Motor neuron (in vitro differentiated cells): ENCODE measurements at regions of chr4 and their contacts with region 1.

Region 1: GRCh38 chr4:4488405-4489404 is 53.1 kb downstream of the STX18 start:
- ATAC-seq: peak; percentile 82 to 97 (median 90)
- H3K4me3 ChIP-seq: no peak overlapping the region
- H3K27ac ChIP-seq: no peak overlapping the region
- H3K4me1 ChIP-seq: peaks cover 0 to 5% of the 10 kb centered on the region in 2 donors

Region 2: DNA sequence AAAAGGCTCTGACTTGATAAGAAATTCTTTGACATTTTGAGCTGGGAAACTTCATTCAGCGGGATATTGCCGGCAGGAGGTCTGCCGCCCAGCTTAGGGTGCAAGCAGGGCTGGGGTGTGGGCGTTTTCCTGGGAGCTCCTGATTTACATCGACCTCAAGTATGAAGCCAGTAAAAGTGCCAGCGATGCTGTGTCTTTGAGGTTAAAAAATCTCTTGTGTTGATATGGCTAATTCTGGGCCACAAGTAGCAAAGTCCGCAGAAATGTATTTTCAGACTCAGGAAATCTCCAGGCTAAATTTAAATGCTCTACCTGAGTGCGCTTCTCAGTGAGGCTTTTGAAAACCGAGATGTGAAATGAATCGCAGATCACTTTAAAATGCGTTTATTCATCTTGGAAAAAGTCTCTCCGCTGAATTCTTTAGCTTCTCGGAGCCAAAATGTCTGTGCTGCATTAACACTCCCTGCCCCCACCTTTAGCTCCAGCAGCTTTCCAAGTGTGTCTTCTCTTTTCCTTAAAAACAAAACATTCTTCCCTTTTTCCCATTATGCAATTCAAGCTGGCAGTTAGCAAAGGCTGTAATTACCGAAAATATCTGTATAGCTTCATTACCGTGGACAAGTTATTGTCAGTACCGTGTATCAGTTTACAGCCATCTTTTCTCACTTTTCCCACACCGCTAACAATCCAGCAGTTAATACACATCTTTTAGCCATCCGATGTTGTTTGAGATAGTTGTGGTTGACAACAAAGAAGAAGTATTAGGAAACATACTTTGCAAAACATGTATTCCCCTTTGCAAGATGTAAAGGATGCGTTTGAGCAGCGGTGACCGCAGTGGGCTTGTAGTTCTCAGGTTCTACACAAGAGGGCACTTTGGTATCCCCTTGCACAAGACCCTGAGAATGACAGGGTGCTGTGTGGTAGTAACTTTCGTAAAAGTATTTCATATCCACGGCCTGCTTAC is 189.1 kb after region 1 on chr4:
- in situ Hi-C with region 1: loop called in 1 of 9 experiments (anchors 25 kb)
- ATAC-seq: peak in 3 of 8 experiments; percentile 88 to 93 (median 93)
- H3K4me3 ChIP-seq: no peak overlapping the region
- H3K27ac ChIP-seq: no peak overlapping the region
- H3K4me1 ChIP-seq: peaks cover 4% of the 10 kb centered on the region in 2 donors

Region 3: DNA sequence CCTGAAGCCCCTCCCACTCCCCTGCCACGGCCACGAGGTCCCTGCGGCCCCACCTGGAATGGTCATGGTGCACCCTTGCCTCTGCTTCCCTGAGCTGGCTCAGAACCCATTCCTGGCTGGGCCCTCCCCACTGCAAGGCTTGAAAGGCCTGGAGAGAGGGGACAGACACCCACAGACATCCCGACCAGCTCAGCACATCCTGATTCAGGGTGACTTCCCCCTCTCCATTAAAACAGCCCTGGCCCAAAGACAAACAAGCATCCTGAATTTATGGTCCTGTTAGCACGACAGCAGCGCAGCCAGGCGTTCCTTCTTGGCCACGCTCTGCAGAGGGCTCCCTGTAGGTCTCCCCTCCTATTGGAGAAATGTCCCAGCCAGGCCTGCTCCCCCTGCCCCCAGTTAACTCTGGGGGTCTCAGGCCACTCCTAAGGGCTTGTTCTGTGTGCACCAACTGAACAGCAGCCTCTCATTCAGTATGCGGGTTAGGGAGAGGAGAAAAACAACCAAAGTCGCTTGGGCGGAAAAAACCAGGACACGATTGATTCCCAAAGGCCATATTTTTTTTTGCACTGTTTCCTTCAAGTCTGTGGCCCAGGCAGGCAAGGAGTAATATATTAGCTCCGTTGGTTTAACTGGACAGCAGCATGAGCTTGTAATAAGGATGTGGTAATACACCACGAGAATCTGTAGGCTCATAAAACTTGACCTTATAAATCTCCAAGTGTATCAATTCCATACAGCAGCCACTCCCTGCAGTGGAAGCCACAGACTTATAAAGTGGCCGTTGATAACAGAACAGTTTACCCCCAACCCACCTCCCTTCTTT is 264.1 kb after region 1 on chr4:
- in situ Hi-C with region 1: no loop called
- ATAC-seq: peak in 5 of 8 experiments; percentile 80 to 90 (median 86)
- H3K4me3 ChIP-seq: no peak overlapping the region
- H3K27ac ChIP-seq: peak overlapping the region; percentile 66 to 68
- H3K4me1 ChIP-seq: peaks cover 22 to 30% of the 10 kb centered on the region in 2 donors

Region 4: DNA sequence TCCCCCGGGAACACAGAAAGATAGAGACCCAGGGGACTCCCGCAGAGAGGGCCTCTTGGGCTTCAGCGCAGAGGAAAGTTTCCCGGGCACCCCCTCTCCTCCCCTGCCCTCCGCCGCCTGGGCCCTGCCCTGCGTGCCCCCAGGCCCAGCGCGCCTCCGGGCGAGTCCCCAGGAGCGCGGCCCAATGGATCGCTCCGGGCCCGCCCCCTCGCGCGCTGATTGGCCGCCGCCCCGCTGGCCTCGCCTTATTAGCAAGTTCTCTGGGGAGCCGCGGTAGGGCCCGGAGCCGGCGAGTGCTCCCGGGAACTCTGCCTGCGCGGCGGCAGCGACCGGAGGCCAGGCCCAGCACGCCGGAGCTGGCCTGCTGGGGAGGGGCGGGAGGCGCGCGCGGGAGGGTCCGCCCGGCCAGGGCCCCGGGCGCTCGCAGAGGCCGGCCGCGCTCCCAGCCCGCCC is 370.7 kb after region 1 on chr4 and contains the start of gene MSX1:
- in situ Hi-C with region 1: loop called in 1 of 9 experiments (anchors 25 kb)
- ATAC-seq: peak; percentile 86 to 95 (median 92)
- H3K4me3 ChIP-seq: peak within 1 kb of the TSS; percentile 29 to 58 (median 42)
- H3K27ac ChIP-seq: no peak within 1 kb of the TSS
- H3K4me1 ChIP-seq: peaks cover 17 to 20% of the 10 kb centered on the region in 2 donors
- total RNA-seq, gene MSX1: 1.1 to 52.3 (median 5.0) TPM

Region 5: GRCh38 chr4:5812506-5813229 is 1324.0 kb after region 1 on chr4:
- in situ Hi-C with region 1: loop called in 1 of 9 experiments (anchors 25 kb)
- ATAC-seq: peak; percentile 64 to 99 (median 82)
- H3K4me3 ChIP-seq: no peak overlapping the region
- H3K27ac ChIP-seq: no peak overlapping the region
- H3K4me1 ChIP-seq: peaks cover 0 to 5% of the 10 kb centered on the region in 2 donors